Calu3 (cell line): ENCODE measurements at regions of chr1 and their contacts with region 1.

Region 1: DNA sequence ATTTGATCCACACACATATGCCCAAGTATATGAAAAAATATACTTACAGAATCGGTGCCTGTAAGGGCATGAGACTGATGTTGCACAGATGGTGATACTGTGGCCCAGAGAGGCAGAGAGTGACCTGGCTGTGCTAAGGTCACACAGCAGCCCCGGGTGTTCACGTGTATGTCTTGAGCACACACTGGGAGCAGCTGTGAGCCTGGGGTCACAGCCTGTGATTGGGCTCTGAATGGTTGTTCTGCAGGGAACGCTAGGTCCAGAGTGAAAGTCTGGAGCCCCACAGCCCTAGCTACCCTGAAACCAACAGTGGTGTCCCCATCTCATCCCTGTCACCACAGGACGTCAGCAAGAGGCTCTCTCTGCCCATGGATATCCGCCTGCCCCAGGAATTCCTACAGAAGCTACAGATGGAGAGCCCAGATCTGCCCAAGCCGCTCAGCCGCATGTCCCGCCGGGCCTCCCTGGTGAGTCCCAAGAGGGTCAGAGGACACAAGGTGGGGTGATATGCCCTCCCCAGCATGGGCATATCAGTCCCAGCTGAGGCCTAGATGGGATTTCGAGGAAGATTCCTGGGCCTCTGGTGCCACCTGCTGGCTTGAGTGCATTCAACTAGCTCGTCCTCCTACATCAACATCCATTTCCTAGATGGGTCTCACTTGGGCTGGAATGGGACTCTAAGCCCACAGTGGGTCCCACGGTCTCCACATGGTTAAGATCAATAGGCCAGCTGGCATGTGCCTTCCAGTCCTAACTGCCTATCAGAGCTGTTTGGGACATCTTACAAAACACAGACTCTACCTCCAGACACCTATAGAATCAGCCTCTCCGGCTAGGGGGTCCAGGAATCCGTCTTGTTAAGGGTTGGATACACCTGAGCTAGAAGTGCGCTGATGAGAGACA is 19.7 kb downstream of the CDK18 start:
- DNase-seq: peak; percentile 87
- H3K4me3 Mint-ChIP-seq: no peak overlapping the region
- H3K27ac Mint-ChIP-seq: no peak overlapping the region
- H3K4me1 Mint-ChIP-seq: peaks cover 10% of the 10 kb centered on the region
- H3K27me3 Mint-ChIP-seq: no peaks in the 10 kb centered on the region
- CTCF ChIP-seq: peak; percentile 90

Region 2: DNA sequence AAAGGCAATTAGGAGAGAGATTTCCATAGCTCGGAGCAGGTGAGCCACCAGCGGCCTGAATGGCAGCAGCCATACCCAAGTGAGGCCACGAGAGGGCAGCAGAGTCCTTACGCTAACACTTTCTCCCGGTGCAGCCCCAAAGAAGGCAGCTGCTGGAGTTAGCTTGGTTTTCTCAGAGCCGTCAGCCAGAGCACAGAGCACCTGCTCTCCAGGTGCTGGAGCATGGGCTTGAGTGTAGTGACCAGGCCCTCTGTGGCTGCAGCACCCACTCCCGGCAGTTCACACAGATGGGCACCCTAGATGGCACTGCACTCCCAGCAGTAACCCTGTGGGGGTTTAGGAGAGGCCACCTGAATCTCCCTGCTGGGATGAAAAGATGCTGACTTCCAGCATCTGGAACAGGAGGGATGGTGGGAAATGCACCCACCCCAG is 250.6 kb before region 1 on chr1:
- CTCF ChIA-PET with region 1: interaction called, 12 read pairs
- intact Hi-C with region 1: no loop called
- DNase-seq: peak; percentile 91
- H3K4me3 Mint-ChIP-seq: no peak overlapping the region
- H3K27ac Mint-ChIP-seq: no peak overlapping the region
- H3K4me1 Mint-ChIP-seq: peaks cover 18% of the 10 kb centered on the region
- H3K27me3 Mint-ChIP-seq: peaks cover 42% of the 10 kb centered on the region
- CTCF ChIP-seq: peak; percentile 93

Region 3: GRCh38 chr1:205335643-205336091 is 188.5 kb before region 1 on chr1:
- CTCF ChIA-PET with region 1: interaction called, 16 read pairs
- intact Hi-C with region 1: loop called (anchors 1 kb)
- DNase-seq: peak; percentile 95
- H3K4me3 Mint-ChIP-seq: no peak overlapping the region
- H3K27ac Mint-ChIP-seq: no peak overlapping the region
- H3K4me1 Mint-ChIP-seq: no peaks in the 10 kb centered on the region
- H3K27me3 Mint-ChIP-seq: peaks cover 69% of the 10 kb centered on the region
- CTCF ChIP-seq: peak; percentile 96

Region 4: DNA sequence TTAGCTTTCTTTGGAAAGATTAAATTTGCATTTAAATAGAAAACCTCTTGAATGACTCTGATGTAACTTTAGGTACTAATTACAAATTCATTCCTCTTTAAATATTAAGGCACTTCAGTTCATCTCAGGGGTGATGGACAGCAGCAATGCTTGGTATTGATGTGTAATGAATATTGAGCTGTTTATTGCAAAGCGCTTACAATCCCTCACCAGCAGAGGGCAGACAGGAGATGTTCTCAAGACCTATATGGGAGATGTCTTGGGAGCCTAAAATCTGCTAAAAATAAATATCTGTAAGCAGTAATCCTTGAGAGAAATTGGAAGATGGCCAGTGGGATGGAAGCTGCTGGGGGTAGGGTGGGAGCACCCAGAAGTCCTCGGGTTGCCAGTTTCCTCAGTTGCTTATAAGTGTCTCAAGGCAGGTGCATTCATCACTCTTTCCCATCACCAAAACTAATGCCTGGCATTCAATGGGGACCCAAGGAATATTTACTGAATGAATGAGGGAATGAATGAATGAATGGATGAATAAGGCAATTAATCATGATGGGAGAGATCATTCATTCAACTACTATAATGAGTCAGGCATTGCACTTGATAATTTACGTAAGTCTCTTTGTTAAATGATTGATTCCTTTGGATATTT is 169.8 kb before region 1 on chr1:
- CTCF ChIA-PET with region 1: interaction called, 18 read pairs
- intact Hi-C with region 1: loop called (anchors 1 kb)
- DNase-seq: peak; percentile 74
- H3K4me3 Mint-ChIP-seq: no peak overlapping the region
- H3K27ac Mint-ChIP-seq: no peak overlapping the region
- H3K4me1 Mint-ChIP-seq: peaks cover 25% of the 10 kb centered on the region
- H3K27me3 Mint-ChIP-seq: peaks cover 26% of the 10 kb centered on the region
- CTCF ChIP-seq: peak; percentile 88

Region 5: DNA sequence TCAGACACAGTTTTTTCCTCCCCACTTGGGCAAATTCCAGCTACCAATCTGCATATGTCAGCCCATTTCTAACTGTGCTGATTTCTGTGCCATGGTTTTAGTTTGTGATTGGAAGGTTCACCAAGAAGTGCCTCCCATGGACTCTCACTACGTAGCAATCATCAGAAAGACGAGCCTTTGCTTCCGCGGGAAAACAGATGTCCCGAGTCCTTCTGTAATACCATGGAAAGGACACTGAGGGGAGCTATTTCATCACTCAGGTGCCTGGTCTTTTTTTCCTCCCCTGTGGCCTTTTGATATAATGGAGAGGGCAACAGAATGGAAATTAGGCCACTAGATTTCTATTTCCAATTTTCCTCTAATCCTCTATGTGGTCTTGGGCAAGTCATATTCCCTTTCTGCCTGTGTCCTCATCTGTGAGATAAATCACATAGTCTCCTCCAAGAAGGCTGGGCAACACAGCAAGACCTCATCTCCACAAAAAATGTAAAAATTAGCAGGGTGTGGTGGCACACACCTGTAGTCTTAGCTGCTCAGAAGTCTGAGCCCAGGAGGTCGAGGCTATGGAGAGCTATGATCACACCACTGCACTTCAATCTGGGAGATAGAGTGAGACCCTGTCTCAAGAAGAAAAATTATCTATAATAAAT is 127.0 kb before region 1 on chr1:
- CTCF ChIA-PET with region 1: interaction called, 21 read pairs
- intact Hi-C with region 1: loop called (anchors 1 kb)
- DNase-seq: peak; percentile 41
- H3K4me3 Mint-ChIP-seq: no peak overlapping the region
- H3K27ac Mint-ChIP-seq: no peak overlapping the region
- H3K4me1 Mint-ChIP-seq: no peaks in the 10 kb centered on the region
- H3K27me3 Mint-ChIP-seq: peaks cover 18% of the 10 kb centered on the region
- CTCF ChIP-seq: peak; percentile 84

Region 6: DNA sequence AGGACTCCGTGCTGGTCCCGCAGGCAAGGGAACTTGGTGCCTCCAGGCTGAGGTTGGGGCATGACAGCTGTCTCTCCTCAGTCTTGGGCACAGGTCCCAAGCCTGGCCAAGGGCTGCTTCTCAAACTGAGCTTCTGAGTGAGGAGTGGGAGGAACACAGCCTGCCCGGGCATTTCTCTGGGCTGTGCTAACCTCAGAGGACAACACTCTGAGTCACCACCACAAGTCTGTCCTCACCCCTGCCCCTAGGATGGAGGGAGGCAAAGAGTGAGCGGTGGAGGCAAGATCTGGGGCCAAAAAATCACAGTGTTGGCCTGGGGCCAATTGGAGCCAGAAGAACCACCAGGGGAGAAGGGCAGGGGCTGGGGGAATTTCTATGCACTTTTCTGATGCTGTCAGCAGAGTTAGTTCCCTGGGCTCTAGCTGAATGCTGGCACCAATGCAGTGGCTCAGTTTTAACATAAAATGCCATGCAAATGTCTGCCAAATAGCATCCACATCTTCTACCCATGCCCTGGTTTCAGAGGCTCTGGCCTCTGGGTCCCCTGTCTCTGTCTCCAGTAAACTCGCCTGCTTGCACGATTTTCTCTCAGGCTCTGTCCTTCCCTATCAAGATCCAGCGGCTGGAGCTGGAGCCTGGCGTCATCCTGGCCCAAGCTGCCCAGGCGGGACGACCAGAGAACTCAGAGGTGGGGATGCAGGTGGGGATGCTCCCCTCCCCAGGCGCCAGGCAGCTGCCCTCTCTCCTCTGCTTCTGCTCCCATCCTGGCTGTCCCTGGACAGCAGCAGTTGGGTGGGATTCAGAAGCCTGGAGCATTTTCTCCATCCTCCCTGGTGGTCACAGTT is 30.7 kb before region 1 on chr1:
- CTCF ChIA-PET with region 1: interaction called, 51 read pairs
- intact Hi-C with region 1: loop called (anchors 1 kb)
- DNase-seq: peak; percentile 62
- H3K4me3 Mint-ChIP-seq: no peak overlapping the region
- H3K27ac Mint-ChIP-seq: no peak overlapping the region
- H3K4me1 Mint-ChIP-seq: peaks cover 18% of the 10 kb centered on the region
- H3K27me3 Mint-ChIP-seq: peaks cover 76% of the 10 kb centered on the region
- CTCF ChIP-seq: no peak

Region 7: GRCh38 chr1:205536759-205537361 is 12.7 kb after region 1 on chr1:
- CTCF ChIA-PET with region 1: interaction called, 14 read pairs
- intact Hi-C with region 1: no loop called
- DNase-seq: peak; percentile 80
- H3K4me3 Mint-ChIP-seq: peak overlapping the region; percentile 0
- H3K27ac Mint-ChIP-seq: peak overlapping the region; percentile 7
- H3K4me1 Mint-ChIP-seq: peaks cover 28% of the 10 kb centered on the region
- H3K27me3 Mint-ChIP-seq: no peaks in the 10 kb centered on the region
- CTCF ChIP-seq: no peak